Heart left ventricle (tissue), 16 donors: ENCODE measurements at regions of chr12 and their contacts with region 1.

Region 1: GRCh38 chr12:94101738-94102660 is 46.4 kb upstream of the PLXNC1 start:
- DNase-seq: peak; percentile 83 to 91 (median 85)
- ATAC-seq: peak; percentile 80 to 91 (median 88)
- H3K4me3 ChIP-seq: peak overlapping the region; percentile 41 to 81 (median 70)
- H3K27ac ChIP-seq: peak overlapping the region in 11 of 12 donors; percentile 48 to 82 (median 61)
- H3K4me1 ChIP-seq: peaks cover 0 to 17% (median 10%) of the 10 kb centered on the region in 12 donors
- H3K27me3 ChIP-seq: peaks cover 0 to 4% (median 0%) of the 10 kb centered on the region in 9 donors
- CTCF ChIP-seq: peak; percentile 76 to 90 (median 80)
- POLR2A ChIP-seq: no peak

Region 2: GRCh38 chr12:92987362-92987761 is 1114.6 kb before region 1 on chr12:
- intact Hi-C with region 1: loop called in 3 of 10 experiments (anchors 5 to 10 kb)
- DNase-seq: peak in 1 of 5 donors; percentile 21
- ATAC-seq: peak; percentile 59 to 86 (median 76)
- H3K4me3 ChIP-seq: peak overlapping the region in 1 of 12 donors; percentile 4
- H3K27ac ChIP-seq: peak overlapping the region in 11 of 12 donors; percentile 10 to 79 (median 59)
- H3K4me1 ChIP-seq: peaks cover 0 to 20% (median 6%) of the 10 kb centered on the region in 12 donors
- H3K27me3 ChIP-seq: no peaks in the 10 kb centered on the region
- CTCF ChIP-seq: peak; percentile 40 to 78 (median 64)
- POLR2A ChIP-seq: no peak

Region 3: GRCh38 chr12:93521225-93522080 is 580.5 kb before region 1 on chr12:
- intact Hi-C with region 1: loop called in 1 of 10 experiments (anchors 5 kb)
- DNase-seq: peak in 2 of 5 donors; percentile 27 to 29
- ATAC-seq: peak in 1 of 4 donors; percentile 53
- H3K4me3 ChIP-seq: no peak overlapping the region
- H3K27ac ChIP-seq: no peak overlapping the region
- H3K4me1 ChIP-seq: peaks cover 0 to 12% (median 1%) of the 10 kb centered on the region in 12 donors
- H3K27me3 ChIP-seq: no peaks in the 10 kb centered on the region
- CTCF ChIP-seq: no peak
- POLR2A ChIP-seq: no peak

Region 4: GRCh38 chr12:93742110-93742934 is 359.7 kb before region 1 on chr12:
- intact Hi-C with region 1: loop called in 1 of 10 experiments (anchors 5 kb)
- DNase-seq: peak; percentile 73 to 85 (median 80)
- ATAC-seq: peak; percentile 78 to 97 (median 92)
- H3K4me3 ChIP-seq: peak overlapping the region; percentile 33 to 70 (median 64)
- H3K27ac ChIP-seq: peak overlapping the region; percentile 88 to 95 (median 93)
- H3K4me1 ChIP-seq: peaks cover 0 to 85% (median 60%) of the 10 kb centered on the region in 12 donors
- H3K27me3 ChIP-seq: no peaks in the 10 kb centered on the region
- CTCF ChIP-seq: peak in 9 of 12 donors; percentile 17 to 54 (median 36)
- POLR2A ChIP-seq: peak in 1 of 2 donors; percentile 13

Region 5: GRCh38 chr12:93894391-93895088 is 207.5 kb before region 1 on chr12:
- intact Hi-C with region 1: loop called in 2 of 10 experiments (anchors 5 to 10 kb)
- DNase-seq: peak; percentile 87 to 96 (median 91)
- ATAC-seq: peak; percentile 83 to 96 (median 94)
- H3K4me3 ChIP-seq: peak overlapping the region in 9 of 12 donors; percentile 4 to 41 (median 22)
- H3K27ac ChIP-seq: peak overlapping the region; percentile 79 to 90 (median 86)
- H3K4me1 ChIP-seq: peaks cover 10 to 50% (median 36%) of the 10 kb centered on the region in 12 donors
- H3K27me3 ChIP-seq: no peaks in the 10 kb centered on the region
- CTCF ChIP-seq: peak in 1 of 12 donors; percentile 22
- POLR2A ChIP-seq: peak in 1 of 2 donors; percentile 16

Region 6: DNA sequence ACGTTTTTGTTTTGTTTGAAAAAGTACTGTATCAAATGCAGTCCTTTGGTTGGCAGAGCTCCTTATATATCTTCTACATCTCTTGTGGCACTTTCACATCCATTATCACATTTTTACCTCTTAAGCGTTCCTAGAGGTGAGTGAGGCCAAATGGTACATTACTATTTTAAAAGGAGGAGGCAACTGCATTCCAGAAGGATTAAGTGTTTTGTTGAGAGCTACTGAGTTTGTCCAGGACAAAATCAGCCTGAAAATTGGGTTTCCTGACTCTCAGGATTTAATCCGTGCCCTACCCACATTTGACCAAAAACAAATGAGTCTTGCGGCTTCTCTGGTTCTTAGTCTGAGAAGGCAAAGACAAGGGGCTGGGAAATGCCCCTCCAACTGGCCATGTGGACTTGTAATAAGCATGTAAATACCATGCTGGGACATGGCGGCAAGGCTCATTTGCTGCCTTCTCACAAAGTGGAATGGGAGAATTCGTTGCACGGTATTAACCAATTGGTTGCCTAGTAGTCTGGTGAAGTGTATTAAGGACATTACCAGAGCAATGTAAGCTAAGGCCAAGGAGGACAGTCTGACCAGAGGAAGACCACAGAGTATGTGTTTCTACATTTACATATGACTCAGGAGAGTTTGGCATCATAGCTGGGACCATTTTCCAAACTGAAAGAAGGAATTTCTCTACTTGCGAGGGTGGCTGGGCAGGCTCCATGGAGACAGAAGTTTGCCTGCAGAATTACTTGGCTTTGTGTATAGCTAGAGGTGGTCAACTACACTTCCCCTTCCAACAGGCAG is 129.4 kb before region 1 on chr12:
- intact Hi-C with region 1: no loop called
- DNase-seq: no peak
- ATAC-seq: peak in 2 of 4 donors; percentile 20 to 32
- H3K4me3 ChIP-seq: no peak overlapping the region
- H3K27ac ChIP-seq: peak overlapping the region in 1 of 12 donors; percentile 49
- H3K4me1 ChIP-seq: peaks cover 0 to 27% (median 9%) of the 10 kb centered on the region in 12 donors
- H3K27me3 ChIP-seq: no peaks in the 10 kb centered on the region
- CTCF ChIP-seq: no peak
- POLR2A ChIP-seq: no peak

Region 7: GRCh38 chr12:93990832-93991803 is 110.9 kb before region 1 on chr12:
- intact Hi-C with region 1: loop called in 5 of 10 experiments (anchors 2 to 10 kb)
- DNase-seq: peak in 4 of 5 donors; percentile 49 to 70 (median 59)
- ATAC-seq: peak; percentile 93 to 96 (median 94)
- H3K4me3 ChIP-seq: peak overlapping the region in 7 of 12 donors; percentile 11 to 34 (median 17)
- H3K27ac ChIP-seq: peak overlapping the region in 6 of 12 donors; percentile 22 to 61 (median 53)
- H3K4me1 ChIP-seq: peaks cover 0 to 16% (median 0%) of the 10 kb centered on the region in 12 donors
- H3K27me3 ChIP-seq: no peaks in the 10 kb centered on the region
- CTCF ChIP-seq: peak; percentile 18 to 68 (median 50)
- POLR2A ChIP-seq: no peak